ENCODE measurements at regions of chr13 and their contacts with region 1.

Region 1: DNA sequence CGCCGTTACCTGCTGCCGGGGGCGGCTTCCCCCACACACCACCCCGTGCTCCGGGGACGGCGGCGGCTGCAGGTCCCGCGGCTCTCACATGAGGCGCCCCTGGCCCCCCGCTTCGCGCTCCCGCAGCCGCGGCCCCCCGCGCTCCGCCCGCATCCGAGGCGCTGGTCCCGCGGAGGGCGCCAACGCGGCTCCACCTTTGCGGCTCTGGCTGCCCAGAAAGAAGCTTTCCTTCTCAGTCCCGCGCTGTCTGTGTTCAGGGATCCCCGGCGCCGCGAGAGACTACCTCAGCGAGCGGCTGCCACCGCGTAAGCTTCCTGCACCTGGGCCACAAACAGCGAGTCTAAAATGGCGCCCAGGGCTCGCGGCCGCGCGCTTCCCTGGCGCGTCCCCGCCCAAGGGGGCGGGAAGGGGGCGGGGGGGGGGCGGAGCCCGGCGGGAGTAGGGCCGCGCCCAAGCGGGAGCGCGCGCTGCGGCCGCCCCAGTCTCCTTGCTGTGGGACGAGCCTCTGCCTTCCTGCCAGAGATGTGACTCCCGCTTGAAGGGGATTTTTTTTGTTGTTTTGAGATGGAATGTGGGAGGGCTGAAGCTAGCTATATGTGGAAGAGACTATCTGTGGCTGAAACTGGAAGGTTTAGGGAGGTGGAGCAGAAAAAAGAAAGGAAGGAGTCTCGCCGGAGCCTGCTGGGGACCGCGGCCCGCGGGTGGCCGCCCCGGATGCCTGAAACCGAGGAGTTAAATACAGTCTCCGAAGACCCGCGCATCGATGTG is at the start of gene FBXL3:
- DNase-seq: peak; percentile 77 to 91 (median 81)
- ATAC-seq: peak; percentile 72 to 75
- H3K4me3 Mint-ChIP-seq: peak within 1 kb of the TSS; percentile 90 to 99 (median 98)
- H3K27ac Mint-ChIP-seq: peak within 1 kb of the TSS; percentile 94 to 99 (median 96)
- H3K4me1 Mint-ChIP-seq: peaks cover 32 to 59% (median 49%) of the 10 kb centered on the region in 4 donors
- H3K27me3 Mint-ChIP-seq: peaks cover 0 to 2% (median 0%) of the 10 kb centered on the region in 5 donors
- polyA plus RNA-seq, gene FBXL3: 29.3 to 44.7 (median 32.6) TPM

Region 2: DNA sequence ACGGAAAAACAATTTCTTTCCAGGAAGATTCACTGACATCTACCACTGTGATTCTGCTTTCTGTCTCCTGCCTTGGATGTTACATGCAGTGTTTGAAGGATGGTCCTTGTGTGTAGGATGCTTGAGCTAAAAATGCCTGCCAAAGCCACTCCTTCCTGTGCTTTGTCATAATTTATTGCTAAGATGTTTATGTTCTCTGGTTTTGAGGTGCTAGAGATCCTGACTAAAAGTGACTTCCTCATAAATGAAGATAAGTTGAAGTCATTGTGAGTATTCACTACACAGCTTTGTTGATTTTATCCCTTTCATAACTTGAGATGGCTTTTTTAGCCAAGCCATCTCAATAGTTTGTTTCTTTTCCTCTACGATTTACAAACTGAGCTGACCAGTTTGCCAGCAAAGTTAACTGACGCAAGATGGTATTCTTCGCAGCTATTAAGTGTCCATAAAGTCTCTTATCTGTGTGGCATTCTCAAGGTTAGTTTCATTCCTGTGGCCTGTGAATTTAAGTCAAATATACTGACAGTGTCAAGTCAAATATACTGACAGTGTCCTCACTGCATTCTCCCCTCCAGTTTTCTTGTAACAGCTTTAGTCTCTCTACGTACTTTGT is 15.7 kb after region 1 on chr13:
- POLR2A ChIA-PET with region 1: interaction called, 12 read pairs
- DNase-seq: no peak
- ATAC-seq: no peak
- H3K4me3 Mint-ChIP-seq: no peak overlapping the region
- H3K27ac Mint-ChIP-seq: peak overlapping the region in 6 of 10 donors; percentile 13 to 61 (median 36)
- H3K4me1 Mint-ChIP-seq: peaks cover 0 to 11% (median 7%) of the 10 kb centered on the region in 4 donors
- H3K27me3 Mint-ChIP-seq: no peaks in the 10 kb centered on the region

Region 3: GRCh38 chr13:77136902-77137420 is 110.0 kb after region 1 on chr13:
- POLR2A ChIA-PET with region 1: no interaction called
- DNase-seq: no peak
- ATAC-seq: no peak
- H3K4me3 Mint-ChIP-seq: peak overlapping the region in 1 of 10 donors; percentile 41
- H3K27ac Mint-ChIP-seq: peak overlapping the region in 5 of 10 donors; percentile 1 to 59 (median 20)
- H3K4me1 Mint-ChIP-seq: peaks cover 2 to 8% (median 5%) of the 10 kb centered on the region in 4 donors
- H3K27me3 Mint-ChIP-seq: no peaks in the 10 kb centered on the region